ENCODE measurements at regions of chr5 and their contacts with region 1.

Region 1: GRCh38 chr5:58886315-58887207 is 303.7 kb downstream of the RAB3C start:
- DNase-seq: peak; percentile 87

Region 2: GRCh38 chr5:58860680-58861079 is 25.9 kb before region 1 on chr5:
- intact Hi-C with region 1: no loop called
- DNase-seq: no peak

Region 3: GRCh38 chr5:58950224-58950623 is 63.7 kb after region 1 on chr5:
- intact Hi-C with region 1: no loop called
- DNase-seq: no peak

Region 4: DNA sequence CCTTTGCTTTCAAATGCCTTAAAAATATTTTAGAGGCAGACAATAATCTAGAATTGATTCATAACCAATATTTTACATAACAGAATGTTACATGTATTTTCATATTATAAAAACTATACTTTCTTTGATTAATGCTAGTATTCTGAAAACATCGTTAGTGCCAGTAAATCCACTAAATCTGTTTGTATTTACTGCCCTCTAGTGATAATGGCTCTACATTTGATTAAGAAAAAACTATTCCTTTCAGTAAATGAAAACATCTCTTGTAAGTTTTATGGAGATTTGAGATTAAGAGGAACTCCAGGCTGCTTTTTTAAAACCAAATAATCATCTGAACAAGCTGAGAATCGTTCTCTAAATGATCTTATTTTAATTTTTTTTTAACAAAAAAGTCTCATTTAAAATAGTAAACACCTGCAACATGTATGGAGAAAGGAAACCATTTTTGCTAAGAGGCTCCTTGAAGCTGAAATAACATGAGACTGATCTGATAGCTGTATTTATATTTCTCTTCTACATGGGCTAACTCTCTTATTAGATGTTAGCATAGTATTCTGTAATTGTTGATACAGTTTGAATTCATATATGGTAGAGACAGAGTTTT is 121.0 kb after region 1 on chr5:
- intact Hi-C with region 1: loop called (anchors 10 kb)
- DNase-seq: no peak

Region 5: GRCh38 chr5:59174248-59174844 is 287.8 kb after region 1 on chr5:
- intact Hi-C with region 1: loop called in 1 of 2 experiments (anchors 5 kb)
- DNase-seq: no peak

Region 6: GRCh38 chr5:59351076-59351794 is 464.7 kb after region 1 on chr5:
- intact Hi-C with region 1: loop called in 1 of 2 experiments (anchors 10 kb)
- DNase-seq: no peak